ENCODE measurements at regions of chr17 and their contacts with region 1.

Region 1: DNA sequence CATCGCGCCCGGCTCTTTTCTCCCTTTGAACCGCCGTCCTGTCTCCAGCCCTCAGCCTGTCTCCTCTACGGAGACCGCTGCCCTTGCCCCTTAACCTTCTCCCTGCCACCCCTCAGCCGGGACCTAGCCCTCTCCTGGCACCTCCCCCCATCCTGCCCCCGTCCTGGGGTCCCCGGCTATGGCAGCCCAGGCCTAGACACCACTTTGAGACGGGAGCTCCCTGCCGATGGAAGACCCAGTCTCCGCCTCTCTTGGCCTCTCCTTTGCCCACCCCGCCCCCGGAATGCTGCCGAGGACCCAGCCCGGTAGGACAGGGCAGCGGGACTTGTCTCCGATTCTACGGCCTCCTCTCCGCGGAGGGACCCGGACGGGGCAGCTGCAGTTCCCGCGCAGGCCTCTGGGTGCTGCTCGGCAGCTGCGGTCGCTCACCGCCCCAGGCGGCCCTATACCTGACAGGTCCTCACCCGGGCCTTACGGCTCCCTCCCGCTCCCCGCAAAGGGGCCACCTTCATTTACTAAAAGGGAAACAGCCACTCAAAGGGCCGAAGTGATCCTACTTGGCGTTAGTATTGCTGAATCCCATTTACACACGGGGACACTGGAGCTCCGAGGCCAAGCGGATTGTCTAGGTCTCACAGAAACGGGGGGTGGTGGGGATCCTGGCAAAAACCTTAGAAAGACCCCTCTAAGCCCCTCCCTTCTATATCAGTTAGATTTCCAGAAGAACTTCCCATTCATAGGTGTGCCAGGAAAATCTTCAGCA is 32.6 kb upstream of the TAC4 start:
- H3K4me3 ChIP-seq: peak overlapping the region; percentile 21
- H3K27ac ChIP-seq: no peak overlapping the region
- H3K4me1 ChIP-seq: peaks cover 5% of the 10 kb centered on the region; the same call in 1 of the 2 replicates
- CTCF ChIP-seq: peak; percentile 76

Region 2: GRCh38 chr17:49980703-49981197 is 100.3 kb after region 1 on chr17:
- CTCF ChIA-PET with region 1: interaction called, 22 read pairs
- POLR2A ChIA-PET with region 1: no interaction called
- H3K4me3 ChIP-seq: no peak overlapping the region
- H3K27ac ChIP-seq: no peak overlapping the region
- H3K4me1 ChIP-seq: peaks cover 26% of the 10 kb centered on the region
- CTCF ChIP-seq: no peak

Measured in HEK293 (cell line).